B cell (primary cell): ENCODE measurements at regions of chr10 and their contacts with region 1.

Region 1: DNA sequence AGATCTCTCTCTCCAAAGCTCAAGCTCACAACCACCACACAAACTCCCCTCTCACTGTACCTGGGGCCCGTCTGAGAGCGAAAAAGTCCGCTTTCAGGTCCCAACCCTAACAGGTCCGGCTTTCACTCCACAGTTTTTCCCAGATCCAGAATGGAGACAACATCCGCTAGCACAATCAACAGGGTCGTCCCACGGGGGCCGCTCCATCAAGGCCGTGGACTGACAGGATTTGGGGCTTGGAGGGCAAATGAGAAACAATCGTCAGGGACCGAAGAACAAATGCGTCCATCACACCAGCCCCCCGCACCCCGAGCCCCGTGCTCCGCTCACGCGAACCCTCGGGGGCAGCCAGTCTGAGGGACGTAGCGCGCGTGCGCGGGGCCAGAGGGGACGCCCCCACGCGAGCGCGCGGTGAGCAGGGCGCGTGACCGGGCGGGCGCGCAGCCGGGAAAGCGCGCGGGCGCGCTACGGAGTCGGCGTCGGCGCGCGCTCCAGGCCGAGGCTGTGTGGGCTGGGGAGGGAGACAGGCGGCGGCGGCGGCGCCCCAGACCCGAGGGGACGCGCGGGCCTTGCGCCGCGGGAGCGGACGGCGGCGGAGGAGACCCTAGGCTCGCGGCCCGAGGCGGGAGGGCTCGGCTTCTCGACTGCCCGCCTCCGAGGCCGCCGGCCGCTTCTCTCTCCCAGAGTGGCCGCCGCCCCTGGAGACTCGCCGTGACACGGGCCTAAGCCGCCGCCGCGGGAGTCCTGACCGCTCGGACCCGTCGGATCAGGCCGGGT is at the start of gene SLK:
- DNase-seq: peak; percentile 94
- ATAC-seq: peak; percentile 87
- H3K4me3 ChIP-seq: peak within 1 kb of the TSS; percentile 88 to 99 (median 95)
- H3K4me3 Mint-ChIP-seq: peak within 1 kb of the TSS; percentile 97
- H3K27ac ChIP-seq: peak within 1 kb of the TSS; percentile 81 to 88
- H3K27ac Mint-ChIP-seq: peak within 1 kb of the TSS; percentile 86
- H3K4me1 ChIP-seq: peaks cover 21 to 25% of the 10 kb centered on the region in 2 donors
- H3K4me1 Mint-ChIP-seq: peaks cover 32% of the 10 kb centered on the region
- H3K27me3 ChIP-seq: no peaks in the 10 kb centered on the region
- H3K27me3 Mint-ChIP-seq: no peaks in the 10 kb centered on the region
- CTCF ChIP-seq: no peak
- total RNA-seq, gene SLK: 22.6 and 24.5 TPM in 2 replicates

Region 2: DNA sequence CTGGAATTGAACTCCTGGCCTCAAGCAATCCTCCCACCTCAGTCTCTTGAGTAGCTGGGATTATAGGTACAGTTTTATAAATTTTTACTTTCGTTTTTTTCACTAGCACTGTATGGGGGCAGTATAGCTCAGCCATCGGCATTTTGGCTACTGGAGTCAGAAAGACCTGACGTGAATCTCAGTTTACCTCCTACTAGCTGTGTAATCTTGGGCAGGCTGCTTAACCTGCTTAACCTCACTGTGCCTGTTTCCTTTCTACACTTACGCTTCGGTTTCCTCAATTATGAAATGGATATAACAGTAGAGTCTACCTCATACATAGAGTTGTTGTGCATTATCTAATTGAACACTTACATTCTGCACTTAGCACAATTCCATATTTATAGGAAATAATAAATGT is 65.6 kb before region 1 on chr10:
- CTCF ChIA-PET with region 1: no interaction called
- POLR2A ChIA-PET with region 1: no interaction called
- intact Hi-C with region 1: no loop called
- DNase-seq: no peak
- ATAC-seq: no peak
- H3K4me3 ChIP-seq: no peak overlapping the region
- H3K4me3 Mint-ChIP-seq: no peak overlapping the region
- H3K27ac ChIP-seq: no peak overlapping the region
- H3K27ac Mint-ChIP-seq: no peak overlapping the region
- H3K4me1 ChIP-seq: no peaks in the 10 kb centered on the region
- H3K4me1 Mint-ChIP-seq: no peaks in the 10 kb centered on the region
- H3K27me3 ChIP-seq: no peaks in the 10 kb centered on the region
- H3K27me3 Mint-ChIP-seq: no peaks in the 10 kb centered on the region
- CTCF ChIP-seq: no peak

Region 3: DNA sequence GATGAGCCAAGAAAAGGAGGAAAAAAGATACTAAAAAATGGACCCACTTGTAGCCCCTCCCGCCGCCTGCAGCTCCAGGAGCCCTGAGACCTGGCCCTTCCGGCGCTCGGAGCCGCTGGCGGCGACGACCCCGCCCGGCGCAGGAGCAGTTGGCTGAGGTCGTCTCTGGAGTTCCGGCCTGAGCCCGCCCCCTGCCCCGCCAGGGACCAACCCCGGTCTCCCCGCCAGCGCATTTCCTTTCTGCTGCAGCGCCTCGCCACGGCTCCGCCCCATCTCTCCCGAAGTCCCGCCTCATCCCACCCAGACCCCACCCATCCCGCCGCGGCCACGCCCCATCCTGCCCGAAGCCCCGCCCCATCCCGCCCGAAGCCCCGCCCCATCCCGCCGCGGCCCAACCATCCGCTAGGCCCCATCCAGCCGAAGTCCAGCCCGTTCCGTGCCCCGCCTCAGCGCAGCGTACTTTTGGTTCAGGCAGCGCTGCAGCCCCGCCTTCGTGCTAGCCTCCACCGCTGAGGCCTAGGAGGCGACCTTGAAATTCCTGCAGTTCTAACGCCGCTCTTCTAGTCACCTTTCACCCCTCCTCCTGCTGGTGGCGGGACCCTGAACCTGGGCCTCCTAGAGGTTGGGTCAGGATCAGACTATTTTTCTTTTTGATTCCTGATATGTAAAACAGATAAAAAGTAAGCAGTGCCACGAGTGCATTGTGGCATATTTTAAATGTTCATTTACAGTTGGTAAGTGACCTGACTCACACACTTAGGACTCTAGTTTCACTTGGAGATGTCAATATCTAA is 48.6 kb before region 1 on chr10 and contains the start of gene STN1:
- CTCF ChIA-PET with region 1: interaction called, 3 read pairs
- POLR2A ChIA-PET with region 1: no interaction called
- intact Hi-C with region 1: loop called (anchors 1 kb)
- DNase-seq: peak; percentile 96
- ATAC-seq: peak; percentile 93
- H3K4me3 ChIP-seq: peak within 1 kb of the TSS; percentile 67 to 95 (median 94)
- H3K4me3 Mint-ChIP-seq: peak within 1 kb of the TSS; percentile 99
- H3K27ac ChIP-seq: peak within 1 kb of the TSS; percentile 78 to 85
- H3K27ac Mint-ChIP-seq: peak within 1 kb of the TSS; percentile 96
- H3K4me1 ChIP-seq: peaks cover 27 to 38% of the 10 kb centered on the region in 2 donors
- H3K4me1 Mint-ChIP-seq: peaks cover 33% of the 10 kb centered on the region
- H3K27me3 ChIP-seq: no peaks in the 10 kb centered on the region
- H3K27me3 Mint-ChIP-seq: no peaks in the 10 kb centered on the region
- CTCF ChIP-seq: no peak
- total RNA-seq, gene STN1: 16.3 and 16.8 TPM in 2 replicates

Region 4: GRCh38 chr10:103933557-103934121 is 33.2 kb before region 1 on chr10:
- CTCF ChIA-PET with region 1: no interaction called
- POLR2A ChIA-PET with region 1: no interaction called
- intact Hi-C with region 1: no loop called
- DNase-seq: no peak
- ATAC-seq: no peak
- H3K4me3 ChIP-seq: no peak overlapping the region
- H3K4me3 Mint-ChIP-seq: no peak overlapping the region
- H3K27ac ChIP-seq: no peak overlapping the region
- H3K27ac Mint-ChIP-seq: no peak overlapping the region
- H3K4me1 ChIP-seq: no peaks in the 10 kb centered on the region
- H3K4me1 Mint-ChIP-seq: no peaks in the 10 kb centered on the region
- H3K27me3 ChIP-seq: no peaks in the 10 kb centered on the region
- H3K27me3 Mint-ChIP-seq: no peaks in the 10 kb centered on the region
- CTCF ChIP-seq: no peak

Region 5: GRCh38 chr10:103983367-103983911 is 16.6 kb after region 1 on chr10:
- CTCF ChIA-PET with region 1: interaction called, 4 read pairs
- POLR2A ChIA-PET with region 1: interaction called, 4 read pairs
- intact Hi-C with region 1: loop called (anchors 1 kb)
- DNase-seq: peak; percentile 51
- ATAC-seq: peak; percentile 80
- H3K4me3 ChIP-seq: peak overlapping the region in 3 of 5 experiments; percentile 1 to 11 (median 1)
- H3K4me3 Mint-ChIP-seq: peak overlapping the region; percentile 24
- H3K27ac ChIP-seq: peak overlapping the region; percentile 36 to 66
- H3K27ac Mint-ChIP-seq: peak overlapping the region; percentile 83
- H3K4me1 ChIP-seq: peaks cover 11 to 22% of the 10 kb centered on the region in 2 donors
- H3K4me1 Mint-ChIP-seq: peaks cover 46% of the 10 kb centered on the region
- H3K27me3 ChIP-seq: no peaks in the 10 kb centered on the region
- H3K27me3 Mint-ChIP-seq: no peaks in the 10 kb centered on the region
- CTCF ChIP-seq: no peak

Region 6: GRCh38 chr10:104268716-104269645 is 302.1 kb after region 1 on chr10 and contains the start of gene GSTO2:
- CTCF ChIA-PET with region 1: no interaction called
- POLR2A ChIA-PET with region 1: no interaction called
- intact Hi-C with region 1: loop called (anchors 2 kb)
- DNase-seq: peak; percentile 99
- ATAC-seq: peak; percentile 97
- H3K4me3 ChIP-seq: peak within 1 kb of the TSS; percentile 68 to 90 (median 86)
- H3K4me3 Mint-ChIP-seq: peak within 1 kb of the TSS; percentile 88
- H3K27ac ChIP-seq: peak within 1 kb of the TSS; percentile 90 to 95
- H3K27ac Mint-ChIP-seq: peak within 1 kb of the TSS; percentile 92
- H3K4me1 ChIP-seq: peaks cover 20 to 22% of the 10 kb centered on the region in 2 donors
- H3K4me1 Mint-ChIP-seq: peaks cover 37% of the 10 kb centered on the region
- H3K27me3 ChIP-seq: peaks cover 0 to 1% (median under 1%) of the 10 kb centered on the region in 4 experiments
- H3K27me3 Mint-ChIP-seq: no peaks in the 10 kb centered on the region
- CTCF ChIP-seq: no peak
- total RNA-seq, gene GSTO2: 0.89 and 1.4 TPM in 2 replicates

Region 7: DNA sequence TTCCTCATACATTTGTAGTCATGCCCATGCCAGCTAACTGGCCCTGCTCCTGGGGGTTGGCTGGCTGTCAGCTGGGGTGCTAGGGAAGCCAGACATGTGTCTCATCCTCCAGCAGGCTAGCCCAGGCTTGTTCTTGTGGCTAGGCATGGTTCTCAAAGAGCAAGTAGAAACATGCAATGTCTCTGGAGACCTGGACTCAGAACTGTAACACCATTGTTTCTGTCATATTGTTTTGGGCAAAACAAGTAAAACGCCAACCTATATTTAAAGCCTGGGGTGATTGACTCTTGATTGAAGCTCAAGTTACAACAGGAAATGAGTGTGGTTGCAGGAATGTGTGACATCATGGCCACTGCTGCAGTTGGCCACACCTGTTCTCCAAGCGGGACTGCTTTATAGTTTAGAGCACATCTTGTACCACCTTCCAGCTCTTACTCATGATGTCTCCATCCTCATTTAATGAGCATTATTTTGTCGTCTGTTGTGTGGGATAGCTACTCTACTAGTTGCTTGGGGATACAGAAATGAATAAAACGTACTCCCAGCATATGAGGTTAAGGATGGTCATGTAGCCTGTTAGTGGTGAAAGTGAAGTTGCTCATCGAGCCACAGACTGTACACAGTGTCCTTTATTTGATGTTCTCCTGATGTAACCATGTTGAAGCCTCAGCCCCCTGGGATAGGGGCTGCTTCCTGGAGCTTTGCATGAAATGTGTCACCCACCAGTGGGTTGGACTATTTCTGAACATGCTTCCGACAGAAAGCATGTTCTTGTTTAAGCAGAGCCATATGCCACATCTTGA is 842.6 kb after region 1 on chr10:
- CTCF ChIA-PET with region 1: no interaction called
- POLR2A ChIA-PET with region 1: no interaction called
- intact Hi-C with region 1: no loop called
- DNase-seq: no peak
- ATAC-seq: no peak
- H3K4me3 ChIP-seq: no peak overlapping the region
- H3K4me3 Mint-ChIP-seq: no peak overlapping the region
- H3K27ac ChIP-seq: no peak overlapping the region
- H3K27ac Mint-ChIP-seq: no peak overlapping the region
- H3K4me1 ChIP-seq: no peaks in the 10 kb centered on the region
- H3K4me1 Mint-ChIP-seq: no peaks in the 10 kb centered on the region
- H3K27me3 ChIP-seq: no peaks in the 10 kb centered on the region
- H3K27me3 Mint-ChIP-seq: no peaks in the 10 kb centered on the region
- CTCF ChIP-seq: no peak